PC-3 (cell line): ENCODE measurements at regions of chr1 and their contacts with region 1.

Region 1: DNA sequence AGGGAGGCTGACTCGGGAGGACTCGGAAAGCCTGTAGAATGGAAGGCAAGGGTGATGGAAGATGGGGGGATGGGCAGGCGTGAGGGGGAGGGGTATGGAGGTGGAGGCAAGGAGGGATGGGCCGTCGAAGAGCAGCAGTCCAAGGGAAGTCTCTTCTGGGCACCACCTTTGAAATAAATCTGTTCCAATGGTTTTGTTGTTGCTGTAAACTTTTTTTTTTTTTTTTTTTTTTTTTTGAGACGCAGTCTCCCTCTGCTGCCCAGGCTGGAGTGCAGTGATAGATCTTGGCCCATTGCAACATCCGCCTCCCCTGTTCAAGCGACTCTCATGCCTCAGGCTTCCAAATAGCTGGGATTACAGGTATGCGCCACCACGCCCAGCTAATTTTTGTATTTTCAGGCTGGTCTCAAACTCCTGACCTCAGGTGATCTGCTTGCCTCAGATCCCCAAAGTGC is 79.0 kb upstream of the SLC45A1 start:
- DNase-seq: peak; percentile 66
- ATAC-seq: peak; percentile 55
- H3K4me3 ChIP-seq: peak overlapping the region; percentile 33; the same call in 1 of the 2 replicates
- H3K27ac ChIP-seq: peak overlapping the region; percentile 86
- H3K4me1 ChIP-seq: peaks cover 29% of the 10 kb centered on the region
- H3K27me3 ChIP-seq: no peaks in the 10 kb centered on the region
- CTCF ChIP-seq: peak; percentile 44; the same call in 1 of the 2 replicates

Region 2: GRCh38 chr1:7988576-7988975 is 250.3 kb before region 1 on chr1:
- CTCF ChIA-PET with region 1: no interaction called
- POLR2A ChIA-PET with region 1: interaction called, 20 read pairs
- intact Hi-C with region 1: no loop called
- DNase-seq: peak; percentile 70
- ATAC-seq: peak; percentile 64
- H3K4me3 ChIP-seq: no peak overlapping the region
- H3K27ac ChIP-seq: no peak overlapping the region
- H3K4me1 ChIP-seq: no peaks in the 10 kb centered on the region
- H3K27me3 ChIP-seq: no peaks in the 10 kb centered on the region
- CTCF ChIP-seq: no peak

Region 3: GRCh38 chr1:8063298-8064036 is 175.4 kb before region 1 on chr1:
- CTCF ChIA-PET with region 1: no interaction called
- POLR2A ChIA-PET with region 1: no interaction called
- intact Hi-C with region 1: no loop called
- DNase-seq: no peak
- ATAC-seq: no peak
- H3K4me3 ChIP-seq: no peak overlapping the region
- H3K27ac ChIP-seq: peak overlapping the region; percentile 99
- H3K4me1 ChIP-seq: peaks cover 36% of the 10 kb centered on the region
- H3K27me3 ChIP-seq: no peaks in the 10 kb centered on the region
- CTCF ChIP-seq: no peak

Region 4: DNA sequence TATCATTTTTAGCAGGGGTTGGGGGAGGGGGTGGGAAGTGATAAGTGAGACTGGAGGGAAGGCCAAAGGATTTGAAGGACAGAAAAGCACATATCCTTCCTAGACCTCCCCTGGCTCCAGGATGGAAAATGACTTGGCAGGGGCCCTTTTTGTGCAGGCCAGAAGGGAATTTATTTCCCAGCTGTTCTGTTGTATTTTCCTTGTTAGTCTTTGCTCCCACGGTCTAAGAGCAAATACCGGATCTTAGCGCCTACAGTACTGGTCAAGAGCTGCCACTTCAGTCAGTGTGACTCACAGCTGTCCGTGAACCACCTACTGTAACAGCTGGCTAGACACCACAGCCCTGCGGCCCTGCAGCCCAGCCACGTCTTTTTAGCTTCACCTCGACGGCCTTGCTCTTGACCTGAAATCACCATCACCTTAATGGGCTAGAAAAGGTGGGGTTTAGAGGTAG is 161.7 kb before region 1 on chr1:
- CTCF ChIA-PET with region 1: interaction called, 15 read pairs
- POLR2A ChIA-PET with region 1: no interaction called
- intact Hi-C with region 1: no loop called
- DNase-seq: peak; percentile 89
- ATAC-seq: peak; percentile 93
- H3K4me3 ChIP-seq: no peak overlapping the region
- H3K27ac ChIP-seq: peak overlapping the region; percentile 97
- H3K4me1 ChIP-seq: peaks cover 39% of the 10 kb centered on the region
- H3K27me3 ChIP-seq: no peaks in the 10 kb centered on the region
- CTCF ChIP-seq: no peak

Region 5: DNA sequence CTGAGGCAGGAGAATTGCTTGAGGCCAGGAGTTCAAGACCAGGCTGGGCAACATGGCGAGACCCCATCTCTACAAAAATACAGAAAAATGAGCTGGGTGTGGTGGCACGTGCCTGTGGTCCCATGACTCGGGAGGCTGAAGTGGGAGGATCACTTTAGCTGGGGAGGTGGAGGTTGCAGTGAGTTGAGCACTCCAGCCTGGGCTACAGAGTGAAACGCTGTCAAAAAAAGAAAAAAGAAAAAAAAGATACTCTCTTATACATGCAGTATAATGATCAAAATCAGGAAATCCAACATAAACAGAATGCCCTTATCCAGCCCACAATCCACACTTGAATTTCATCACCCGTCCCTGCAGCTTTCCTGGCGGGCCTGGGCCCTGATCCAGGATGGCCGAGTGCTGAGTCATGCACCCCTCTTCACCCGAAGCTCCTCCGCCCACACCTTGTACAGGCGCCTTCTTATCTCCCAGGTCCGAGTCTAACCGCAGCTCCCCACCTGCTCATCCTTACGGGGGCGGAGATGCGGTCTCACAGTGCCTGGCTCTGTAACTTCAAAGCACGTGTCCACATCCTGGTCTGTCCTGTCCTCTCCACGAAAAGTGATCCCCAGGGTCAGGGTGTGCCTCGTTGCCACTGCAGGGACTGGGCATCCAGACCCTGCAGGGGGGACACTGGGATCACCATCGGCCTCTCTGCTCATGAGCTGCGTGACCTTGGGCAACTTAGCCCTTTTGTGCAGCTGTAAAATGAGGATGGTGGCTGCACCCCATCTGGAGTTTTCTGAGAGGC is 41.2 kb before region 1 on chr1:
- CTCF ChIA-PET with region 1: no interaction called
- POLR2A ChIA-PET with region 1: no interaction called
- intact Hi-C with region 1: loop called (anchors 2 kb)
- DNase-seq: peak; percentile 96
- ATAC-seq: peak; percentile 63
- H3K4me3 ChIP-seq: no peak overlapping the region
- H3K27ac ChIP-seq: peak overlapping the region; percentile 98
- H3K4me1 ChIP-seq: peaks cover 61% of the 10 kb centered on the region
- H3K27me3 ChIP-seq: no peaks in the 10 kb centered on the region
- CTCF ChIP-seq: no peak

Region 6: GRCh38 chr1:8211589-8212442 is 27.1 kb before region 1 on chr1:
- CTCF ChIA-PET with region 1: no interaction called
- POLR2A ChIA-PET with region 1: no interaction called
- intact Hi-C with region 1: loop called (anchors 2 kb)
- DNase-seq: peak; percentile 98
- ATAC-seq: peak; percentile 83
- H3K4me3 ChIP-seq: peak overlapping the region; percentile 22; the same call in 1 of the 2 replicates
- H3K27ac ChIP-seq: peak overlapping the region; percentile 98
- H3K4me1 ChIP-seq: peaks cover 33% of the 10 kb centered on the region
- H3K27me3 ChIP-seq: no peaks in the 10 kb centered on the region
- CTCF ChIP-seq: no peak

Region 7: GRCh38 chr1:8314346-8315280 is 75.7 kb after region 1 on chr1:
- CTCF ChIA-PET with region 1: no interaction called
- POLR2A ChIA-PET with region 1: no interaction called
- intact Hi-C with region 1: loop called (anchors 2 kb)
- DNase-seq: peak; percentile 90
- ATAC-seq: peak; percentile 79
- H3K4me3 ChIP-seq: no peak overlapping the region
- H3K27ac ChIP-seq: peak overlapping the region; percentile 62
- H3K4me1 ChIP-seq: peaks cover 29% of the 10 kb centered on the region
- H3K27me3 ChIP-seq: no peaks in the 10 kb centered on the region
- CTCF ChIP-seq: peak; percentile 91

Region 8: GRCh38 chr1:8540261-8540941 is 301.5 kb after region 1 on chr1:
- CTCF ChIA-PET with region 1: no interaction called
- POLR2A ChIA-PET with region 1: no interaction called
- intact Hi-C with region 1: no loop called
- DNase-seq: peak; percentile 53
- ATAC-seq: peak; percentile 81
- H3K4me3 ChIP-seq: no peak overlapping the region
- H3K27ac ChIP-seq: peak overlapping the region; percentile 58
- H3K4me1 ChIP-seq: peaks cover 24% of the 10 kb centered on the region
- H3K27me3 ChIP-seq: no peaks in the 10 kb centered on the region
- CTCF ChIP-seq: no peak

Region 9: DNA sequence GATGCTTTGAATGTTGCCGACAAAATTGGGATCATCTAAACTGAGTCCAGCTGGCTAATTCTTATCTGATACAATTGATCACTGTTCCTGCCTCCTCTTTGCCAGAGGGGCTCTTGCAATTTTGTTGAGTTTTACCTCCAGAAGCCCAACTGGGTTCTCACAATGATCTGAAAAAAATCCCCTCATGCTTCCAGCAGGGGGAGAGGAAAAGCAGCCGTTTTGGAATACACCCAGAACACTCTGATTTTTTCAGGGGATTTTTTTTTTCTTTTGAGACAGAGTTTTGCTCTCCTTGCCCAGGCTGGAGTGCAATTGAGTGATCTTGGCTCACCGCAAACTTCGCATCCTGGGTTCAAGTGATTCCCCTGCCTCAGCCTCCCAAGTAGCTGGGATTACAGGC is 592.5 kb after region 1 on chr1:
- CTCF ChIA-PET with region 1: no interaction called
- POLR2A ChIA-PET with region 1: no interaction called
- intact Hi-C with region 1: no loop called
- DNase-seq: no peak
- ATAC-seq: no peak
- H3K4me3 ChIP-seq: no peak overlapping the region
- H3K27ac ChIP-seq: no peak overlapping the region
- H3K4me1 ChIP-seq: peaks cover 8% of the 10 kb centered on the region; the same call in 1 of the 2 replicates
- H3K27me3 ChIP-seq: no peaks in the 10 kb centered on the region
- CTCF ChIP-seq: peak; percentile 42; the same call in 1 of the 2 replicates